ENCODE measurements at regions of chr12 and their contacts with region 1.

Region 1: DNA sequence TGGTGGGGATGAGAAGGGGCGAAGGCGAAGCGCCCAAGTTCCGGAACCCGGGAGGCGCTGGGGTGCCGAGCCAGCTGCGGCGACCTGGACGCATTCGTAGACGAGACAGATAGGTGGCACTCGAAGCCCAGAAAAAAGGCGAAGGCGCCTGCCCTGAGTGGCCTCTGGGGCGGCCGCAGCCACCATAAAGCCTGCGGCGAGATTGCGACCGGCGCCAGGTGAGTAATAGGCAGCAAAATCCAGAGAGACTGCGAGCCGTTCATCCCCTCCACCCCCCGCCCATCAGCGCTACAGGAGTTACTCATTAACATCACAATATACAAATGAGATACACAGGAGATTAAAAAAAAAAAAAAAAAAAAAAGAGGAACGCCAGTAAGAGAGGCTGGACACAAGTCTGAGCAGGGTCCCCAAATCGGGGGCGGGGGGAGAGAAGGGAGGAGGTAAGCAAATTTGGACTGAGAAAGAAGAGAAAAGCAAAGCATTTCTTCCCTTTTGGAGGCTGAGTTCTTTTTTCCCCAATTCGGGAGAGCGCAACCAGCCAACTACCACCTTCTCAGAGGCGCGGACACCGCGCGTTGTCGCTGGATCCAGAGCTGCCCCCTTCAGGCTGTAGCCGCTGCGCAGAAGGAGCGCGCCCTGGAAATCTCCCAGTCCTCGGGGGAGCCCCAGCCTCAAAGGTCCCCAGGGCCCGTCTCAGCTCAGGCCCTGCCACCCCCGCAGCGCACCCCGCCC is 15.7 kb downstream of the TBX3 start:
- DNase-seq: no peak
- H3K4me3 ChIP-seq: peak overlapping the region; percentile 47 to 90
- H3K27ac ChIP-seq: peak overlapping the region; percentile 99
- H3K4me1 ChIP-seq: peaks cover 36% of the 10 kb centered on the region
- H3K27me3 ChIP-seq: no peaks in the 10 kb centered on the region
- CTCF ChIP-seq: peak; percentile 26 to 67 (median 40)
- POLR2A ChIP-seq: no peak

Region 2: DNA sequence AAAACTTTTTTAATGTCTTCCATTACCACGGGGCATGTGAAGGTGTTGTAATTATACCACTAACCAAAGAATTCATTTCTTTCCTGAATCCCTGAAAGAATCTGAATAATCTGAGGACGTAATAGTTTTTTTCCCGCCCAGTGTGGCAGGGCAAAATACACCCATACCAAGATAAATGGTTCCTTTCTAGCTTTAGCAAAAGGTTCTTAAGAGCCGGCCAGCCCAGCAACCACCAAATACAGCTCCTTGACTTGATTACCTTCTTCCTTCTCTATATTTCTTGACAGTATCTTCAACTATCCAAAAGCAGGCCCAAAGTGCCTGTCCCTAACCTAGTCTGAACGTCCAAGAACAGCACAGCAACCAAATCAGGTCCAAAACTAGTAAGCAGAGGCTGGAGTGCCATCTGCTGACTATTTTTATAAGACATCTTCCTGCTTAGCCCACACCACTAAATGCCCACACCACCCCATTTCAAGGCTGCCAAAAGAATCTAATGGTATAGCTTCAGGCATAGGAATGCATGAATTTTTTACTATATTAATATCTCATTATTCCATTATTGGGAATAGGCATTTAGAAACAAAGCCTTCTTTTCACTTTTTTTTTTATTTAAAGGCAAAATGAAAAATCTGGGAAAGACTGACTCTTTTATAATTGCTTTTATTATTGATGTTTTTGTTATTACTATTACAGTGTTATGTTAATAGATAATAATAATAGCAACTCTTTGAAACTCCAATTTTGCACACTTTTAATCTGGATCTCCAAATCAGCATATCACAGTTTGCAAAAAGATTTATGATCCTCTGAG is 1084.8 kb after region 1 on chr12:
- intact Hi-C with region 1: loop called (anchors 5 kb)
- DNase-seq: no peak
- H3K4me3 ChIP-seq: no peak overlapping the region
- H3K27ac ChIP-seq: peak overlapping the region; percentile 94
- H3K4me1 ChIP-seq: peaks cover 19% of the 10 kb centered on the region
- H3K27me3 ChIP-seq: no peaks in the 10 kb centered on the region
- CTCF ChIP-seq: peak; percentile 43 to 72 (median 57)
- POLR2A ChIP-seq: no peak

Measured in vagina (tissue), 2 donors.